Transverse colon (tissue), 4 donors: ENCODE measurements at regions of chr3 and their contacts with region 1.

Region 1: DNA sequence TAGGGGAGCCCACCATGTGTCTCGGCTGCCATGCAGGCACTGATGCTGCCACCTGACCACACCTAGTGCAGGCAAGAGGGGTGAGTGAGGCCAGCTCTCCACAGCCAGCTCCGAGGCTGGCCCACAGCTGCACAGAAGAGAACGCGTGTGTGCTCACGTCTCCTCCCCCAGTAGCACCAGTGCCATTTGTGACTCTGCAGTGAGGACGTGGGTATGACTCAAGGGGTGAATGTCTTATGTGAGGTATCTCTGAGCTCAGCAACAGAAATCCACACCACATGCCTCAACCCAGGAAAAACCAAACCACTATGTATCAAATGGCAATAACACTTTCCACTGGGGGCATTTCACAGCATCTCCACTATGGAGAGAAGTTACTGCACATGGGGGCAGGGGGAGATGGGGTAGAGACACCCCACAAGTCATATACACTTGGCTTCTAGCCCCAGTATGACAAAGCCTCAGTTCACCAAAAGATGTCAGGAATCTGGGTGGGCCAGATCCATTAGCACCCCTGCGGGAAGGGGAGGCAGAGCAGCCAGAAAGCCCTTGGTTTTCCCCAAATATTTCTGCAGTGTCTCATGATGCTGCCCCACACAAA is 87.6 kb downstream of the LRIG1 start:
- DNase-seq: no peak
- H3K4me3 ChIP-seq: no peak overlapping the region
- H3K27ac ChIP-seq: peak overlapping the region; percentile 37 to 87 (median 69)
- H3K4me1 ChIP-seq: peaks cover 8 to 50% (median 28%) of the 10 kb centered on the region in 4 donors
- H3K27me3 ChIP-seq: no peaks in the 10 kb centered on the region
- CTCF ChIP-seq: no peak
- EP300 ChIP-seq: no peak
- POLR2A ChIP-seq: no peak

Region 2: GRCh38 chr3:66703501-66703900 is 290.2 kb after region 1 on chr3:
- in situ Hi-C with region 1: no loop called
- intact Hi-C with region 1: loop called (anchors 10 kb)
- DNase-seq: no peak
- H3K4me3 ChIP-seq: no peak overlapping the region
- H3K27ac ChIP-seq: peak overlapping the region in 2 of 4 donors; percentile 67
- H3K4me1 ChIP-seq: no peaks in the 10 kb centered on the region
- H3K27me3 ChIP-seq: no peaks in the 10 kb centered on the region
- CTCF ChIP-seq: no peak
- EP300 ChIP-seq: no peak
- POLR2A ChIP-seq: no peak